Aorta (tissue), 5 donors: ENCODE measurements at regions of chr22 and their contacts with region 1.

Region 1: GRCh38 chr22:31983911-31984656 is 39.7 kb downstream of the YWHAH start:
- DNase-seq: no peak
- ATAC-seq: no peak
- H3K4me3 ChIP-seq: no peak overlapping the region
- H3K27ac ChIP-seq: no peak overlapping the region
- H3K4me1 ChIP-seq: no peaks in the 10 kb centered on the region
- H3K27me3 ChIP-seq: no peaks in the 10 kb centered on the region

Region 2: GRCh38 chr22:32024796-32025195 is 40.7 kb after region 1 on chr22:
- intact Hi-C with region 1: no loop called
- DNase-seq: no peak
- ATAC-seq: no peak
- H3K4me3 ChIP-seq: no peak overlapping the region
- H3K27ac ChIP-seq: no peak overlapping the region
- H3K4me1 ChIP-seq: no peaks in the 10 kb centered on the region
- H3K27me3 ChIP-seq: no peaks in the 10 kb centered on the region

Region 3: GRCh38 chr22:32255726-32256125 is 271.6 kb after region 1 on chr22:
- intact Hi-C with region 1: loop called in 1 of 2 experiments (anchors 5 kb)
- DNase-seq: no peak
- ATAC-seq: no peak
- H3K4me3 ChIP-seq: no peak overlapping the region
- H3K27ac ChIP-seq: no peak overlapping the region
- H3K4me1 ChIP-seq: no peaks in the 10 kb centered on the region
- H3K27me3 ChIP-seq: no peaks in the 10 kb centered on the region